SK-N-SH (cell line): ENCODE measurements at regions of chr21 and their contacts with region 1.

Region 1: GRCh38 chr21:29175408-29176134 is 45.1 kb downstream of the MAP3K7CL start:
- DNase-seq: no peak
- H3K4me3 ChIP-seq: peak overlapping the region in 1 of 2 experiments; percentile 25; a peak in 2 of 4 replicates
- H3K27ac ChIP-seq: peak overlapping the region; percentile 72 to 93; a peak in 3 of 4 replicates
- H3K4me1 ChIP-seq: peaks cover 0 to 14% of the 10 kb centered on the region in 2 experiments; a peak in 2 of 4 replicates
- H3K27me3 ChIP-seq: no peaks in the 10 kb centered on the region
- CTCF ChIP-seq: no peak
- EP300 ChIP-seq: no peak
- RAD21 ChIP-seq: no peak

Region 2: DNA sequence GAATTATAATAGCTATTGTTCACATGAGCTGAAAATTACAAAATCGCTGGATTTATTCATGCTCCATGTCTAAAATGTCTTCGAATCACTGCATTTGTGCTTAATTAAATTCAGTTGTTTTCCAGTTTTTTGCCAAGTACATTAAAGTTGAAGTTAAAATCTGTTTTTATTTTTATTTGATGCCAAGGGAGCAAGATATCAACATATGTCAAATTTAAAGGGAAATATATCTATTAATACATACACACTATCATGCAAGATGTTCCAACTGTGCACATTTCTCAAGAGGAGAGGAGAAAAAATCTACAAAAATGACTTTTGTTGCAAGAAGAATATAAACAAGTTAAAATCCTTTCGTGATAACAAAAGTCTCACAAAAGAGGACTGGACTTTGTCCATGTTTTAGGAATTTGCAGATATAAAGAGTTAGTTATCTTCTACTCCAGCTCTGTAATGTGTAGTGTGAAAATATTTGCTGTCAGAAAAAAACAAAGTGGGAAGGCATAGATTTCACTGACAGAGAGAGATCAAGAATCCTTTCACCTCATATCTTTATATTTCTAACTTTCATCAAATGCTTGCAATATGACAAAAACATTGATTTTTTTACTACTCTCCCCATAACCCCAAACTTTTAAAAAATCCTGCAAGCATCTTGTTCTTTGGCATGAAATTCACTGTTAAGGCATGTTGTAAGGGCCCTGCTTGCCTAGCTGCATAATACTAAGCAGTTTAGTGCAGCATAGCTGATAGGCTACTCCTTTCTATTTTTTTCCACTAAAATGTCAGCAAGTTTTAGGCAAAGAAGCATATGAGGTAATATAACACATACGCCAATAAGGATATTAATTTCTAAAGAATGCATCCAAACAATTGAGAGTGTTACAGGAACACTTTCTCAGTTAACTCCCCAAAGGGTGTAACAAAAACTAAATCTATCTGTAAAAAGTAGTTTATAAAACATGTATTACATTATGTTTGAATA is 1868.5 kb before region 1 on chr21:
- CTCF ChIA-PET with region 1: no interaction called
- POLR2A ChIA-PET with region 1: no interaction called
- DNase-seq: no peak
- H3K4me3 ChIP-seq: no peak overlapping the region
- H3K27ac ChIP-seq: peak overlapping the region in 1 of 2 experiments; percentile 48; a peak in 2 of 4 replicates
- H3K4me1 ChIP-seq: no peaks in the 10 kb centered on the region; a peak in 1 of 4 replicates
- H3K27me3 ChIP-seq: no peaks in the 10 kb centered on the region
- CTCF ChIP-seq: no peak
- EP300 ChIP-seq: no peak
- RAD21 ChIP-seq: no peak

Region 3: DNA sequence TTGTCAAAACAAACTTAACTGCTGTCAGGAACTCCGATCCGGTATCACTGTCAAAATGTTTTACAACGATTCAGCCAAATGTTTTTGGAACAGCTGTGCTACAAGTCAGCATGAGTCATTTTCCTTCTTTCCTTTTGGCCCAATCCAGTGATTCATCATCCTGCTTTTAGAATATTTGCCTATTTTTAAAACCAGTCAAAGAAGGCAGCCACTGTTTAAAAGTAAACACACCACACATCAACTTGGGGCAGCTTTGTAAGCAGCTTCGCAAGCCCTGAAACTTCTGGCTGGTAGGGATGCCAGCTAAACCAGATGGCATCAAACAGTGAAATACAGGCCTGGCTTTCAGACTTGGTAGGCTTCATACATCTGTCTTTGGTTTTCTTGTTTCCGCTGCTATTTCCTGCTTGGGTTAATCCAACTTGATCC is 30.2 kb before region 1 on chr21:
- CTCF ChIA-PET with region 1: no interaction called
- POLR2A ChIA-PET with region 1: no interaction called
- DNase-seq: no peak
- H3K4me3 ChIP-seq: peak overlapping the region in 1 of 2 experiments; percentile 8; a peak in 2 of 4 replicates
- H3K27ac ChIP-seq: peak overlapping the region; percentile 79 to 84; a peak in 3 of 4 replicates
- H3K4me1 ChIP-seq: peaks cover 0 to 30% of the 10 kb centered on the region in 2 experiments; a peak in 2 of 4 replicates
- H3K27me3 ChIP-seq: no peaks in the 10 kb centered on the region
- CTCF ChIP-seq: no peak
- EP300 ChIP-seq: peak; percentile 53 to 92
- RAD21 ChIP-seq: no peak

Region 4: DNA sequence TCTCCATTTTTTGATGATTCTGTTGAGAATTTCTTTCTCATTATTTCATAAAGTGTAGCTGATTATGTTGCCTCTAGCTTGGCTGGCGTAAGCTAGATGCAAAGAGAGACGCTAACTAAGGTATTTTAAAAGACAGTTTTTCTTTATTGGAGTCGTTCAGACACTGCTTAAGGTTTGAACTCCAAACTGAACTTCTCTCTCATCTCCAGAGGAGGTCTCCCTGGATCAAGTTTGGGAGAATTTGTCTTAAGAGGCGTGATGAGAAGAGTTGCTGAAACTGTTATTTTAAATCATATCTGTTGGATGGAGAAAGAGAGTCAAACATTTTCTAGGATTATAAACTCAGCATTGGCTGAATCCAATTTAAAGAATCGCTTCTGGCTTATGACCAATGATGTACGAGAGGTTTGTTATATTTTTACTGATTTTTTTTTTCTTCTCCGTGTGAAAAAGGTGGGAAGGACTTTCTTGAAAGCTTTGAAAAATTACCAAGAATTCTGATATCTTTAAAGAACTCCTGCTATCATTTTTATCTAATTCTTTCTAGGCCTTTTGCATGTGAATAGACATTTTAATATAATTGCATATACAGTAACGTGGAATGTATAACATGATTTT is 11.1 kb before region 1 on chr21:
- CTCF ChIA-PET with region 1: interaction called, 10 read pairs
- POLR2A ChIA-PET with region 1: no interaction called
- DNase-seq: peak; percentile 28
- H3K4me3 ChIP-seq: peak overlapping the region in 1 of 2 experiments; percentile 39; a peak in 1 of 4 replicates
- H3K27ac ChIP-seq: peak overlapping the region in 1 of 2 experiments; percentile 44; a peak in 3 of 4 replicates
- H3K4me1 ChIP-seq: peaks cover 0 to 12% of the 10 kb centered on the region in 2 experiments; a peak in 2 of 4 replicates
- H3K27me3 ChIP-seq: no peaks in the 10 kb centered on the region
- CTCF ChIP-seq: peak; percentile 90
- EP300 ChIP-seq: no peak
- RAD21 ChIP-seq: peak; percentile 86